Heart right ventricle (tissue), 16 donors: ENCODE measurements at regions of chr5 and their contacts with region 1.

Region 1: DNA sequence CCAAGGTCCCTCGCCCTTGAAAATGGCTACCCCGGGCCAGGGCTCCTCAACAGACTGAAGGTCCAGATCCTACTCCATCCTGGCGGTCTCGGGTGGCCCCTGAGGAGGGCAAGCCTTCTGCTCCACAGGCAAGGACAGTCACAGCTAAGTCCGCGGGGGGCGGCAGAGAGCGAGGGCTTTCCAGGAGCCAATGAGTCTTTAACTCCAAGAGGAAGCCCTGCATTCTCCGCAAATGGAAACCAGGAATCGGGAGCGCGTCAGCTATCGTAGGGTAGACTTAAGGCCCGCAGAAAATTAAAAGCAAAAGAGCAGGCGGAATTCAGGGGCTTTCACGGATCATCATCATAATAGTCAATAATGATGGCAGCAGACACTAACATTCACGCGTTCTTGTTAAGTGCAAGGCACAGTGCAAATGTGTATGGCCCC is 87.8 kb upstream of the TNFAIP8 start:
- DNase-seq: peak; percentile 92 to 94
- ATAC-seq: peak; percentile 90 to 96 (median 94)
- H3K4me3 ChIP-seq: peak overlapping the region; percentile 56 to 96 (median 82)
- H3K27ac ChIP-seq: peak overlapping the region; percentile 76 to 95 (median 93)
- H3K4me1 ChIP-seq: peaks cover 0 to 44% (median 11%) of the 10 kb centered on the region in 9 donors
- H3K27me3 ChIP-seq: no peaks in the 10 kb centered on the region
- CTCF ChIP-seq: peak in 8 of 9 donors; percentile 22 to 97 (median 61)

Region 2: GRCh38 chr5:118987988-118988865 is 279.7 kb before region 1 on chr5 and contains the start of gene DTWD2:
- intact Hi-C with region 1: loop called in 2 of 10 experiments (anchors 5 kb)
- DNase-seq: peak; percentile 92 to 94
- ATAC-seq: peak; percentile 96 to 99 (median 98)
- H3K4me3 ChIP-seq: peak within 1 kb of the TSS; percentile 60 to 92 (median 80)
- H3K27ac ChIP-seq: peak within 1 kb of the TSS; percentile 79 to 98 (median 94)
- H3K4me1 ChIP-seq: peaks cover 0 to 29% (median 13%) of the 10 kb centered on the region in 9 donors
- H3K27me3 ChIP-seq: no peaks in the 10 kb centered on the region
- CTCF ChIP-seq: peak; percentile 80 to 95 (median 90)
- total RNA-seq, gene DTWD2: 8.9 to 14.8 (median 12.8) TPM

Region 3: GRCh38 chr5:119322948-119323537 is 55.1 kb after region 1 on chr5:
- intact Hi-C with region 1: loop called in 4 of 10 experiments (anchors 5 kb)
- DNase-seq: no peak
- ATAC-seq: no peak
- H3K4me3 ChIP-seq: no peak overlapping the region
- H3K27ac ChIP-seq: peak overlapping the region in 7 of 10 donors; percentile 55 to 84 (median 67)
- H3K4me1 ChIP-seq: peaks cover 0 to 87% (median 14%) of the 10 kb centered on the region in 9 donors
- H3K27me3 ChIP-seq: no peaks in the 10 kb centered on the region
- CTCF ChIP-seq: no peak

Region 4: DNA sequence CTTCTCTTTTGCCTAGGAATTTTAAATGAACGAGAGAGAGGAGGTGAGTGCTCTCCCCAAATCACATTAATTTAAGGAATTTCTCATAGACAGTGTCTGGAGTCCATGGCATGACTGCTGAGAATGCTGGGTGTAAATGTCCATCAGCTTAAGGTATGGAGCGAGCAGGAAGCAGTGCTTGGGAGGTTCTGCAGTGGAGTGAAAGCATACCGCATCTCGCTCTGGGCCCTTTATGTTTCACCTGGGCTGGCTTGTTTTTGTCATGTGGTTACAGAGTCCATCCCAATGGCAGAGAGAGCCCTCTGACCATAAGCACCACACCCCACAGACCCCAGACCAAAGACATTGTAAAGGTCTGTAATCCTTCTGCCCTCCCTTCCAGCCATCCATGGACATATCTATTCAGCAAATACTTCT is 67.3 kb after region 1 on chr5:
- intact Hi-C with region 1: loop called in 5 of 10 experiments (anchors 2 to 10 kb)
- DNase-seq: no peak
- ATAC-seq: peak in 3 of 8 donors; percentile 5 to 17 (median 13)
- H3K4me3 ChIP-seq: peak overlapping the region in 5 of 10 donors; percentile 41 to 51 (median 43)
- H3K27ac ChIP-seq: peak overlapping the region in 3 of 10 donors; percentile 61 to 84 (median 64)
- H3K4me1 ChIP-seq: peaks cover 0 to 98% (median 11%) of the 10 kb centered on the region in 9 donors
- H3K27me3 ChIP-seq: no peaks in the 10 kb centered on the region
- CTCF ChIP-seq: peak in 1 of 9 donors; percentile 16

Region 5: GRCh38 chr5:119411935-119412602 is 144.1 kb after region 1 on chr5:
- intact Hi-C with region 1: loop called in 4 of 10 experiments (anchors 5 to 10 kb)
- DNase-seq: peak; percentile 21 to 65
- ATAC-seq: peak; percentile 83 to 97 (median 94)
- H3K4me3 ChIP-seq: peak overlapping the region; percentile 22 to 57 (median 52)
- H3K27ac ChIP-seq: peak overlapping the region in 8 of 10 donors; percentile 11 to 91 (median 62)
- H3K4me1 ChIP-seq: peaks cover 0 to 34% (median 0%) of the 10 kb centered on the region in 9 donors
- H3K27me3 ChIP-seq: peaks cover 0 to 18% (median 0%) of the 10 kb centered on the region in 7 donors
- CTCF ChIP-seq: peak; percentile 85 to 96 (median 93)

Region 6: DNA sequence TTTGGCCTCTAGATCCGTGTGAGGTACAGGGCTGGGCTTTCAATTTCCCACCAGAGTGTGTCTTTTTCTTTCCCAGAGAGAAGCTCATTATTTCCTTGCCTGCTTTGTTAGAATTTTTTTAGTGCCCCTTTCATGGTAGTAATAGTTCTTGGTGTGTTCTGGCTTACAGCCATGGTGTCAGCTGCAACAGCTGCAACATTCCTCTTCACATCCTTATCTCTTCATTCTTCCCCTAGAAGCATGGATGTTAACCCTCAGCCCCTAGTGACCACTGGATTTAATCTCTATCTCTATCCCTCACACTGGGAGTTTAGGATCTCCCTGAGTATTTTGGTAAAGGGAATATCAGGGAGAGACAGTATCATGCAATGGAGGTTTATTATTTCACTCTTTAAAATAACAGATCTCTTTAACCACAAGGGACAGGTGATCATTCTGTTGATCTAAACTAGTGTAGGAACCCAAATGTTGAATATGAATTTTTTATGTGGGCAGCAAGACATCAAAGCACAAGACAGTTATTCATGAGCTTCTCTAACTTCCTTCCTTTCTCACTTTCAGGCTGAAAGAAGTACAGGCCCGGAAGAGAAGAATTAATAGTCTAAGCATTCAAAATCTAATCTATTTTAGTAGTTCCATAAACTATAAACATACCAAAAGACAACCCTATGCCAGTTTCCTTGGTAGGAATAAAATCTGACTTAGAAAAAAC is 521.6 kb after region 1 on chr5:
- intact Hi-C with region 1: no loop called
- DNase-seq: no peak
- ATAC-seq: no peak
- H3K4me3 ChIP-seq: no peak overlapping the region
- H3K27ac ChIP-seq: no peak overlapping the region
- H3K4me1 ChIP-seq: peaks cover 0 to 8% (median 0%) of the 10 kb centered on the region in 9 donors
- H3K27me3 ChIP-seq: no peaks in the 10 kb centered on the region
- CTCF ChIP-seq: no peak